HAP-1 (cell line): ENCODE measurements at regions of chr2 and their contacts with region 1.

Region 1: GRCh38 chr2:9139491-9140443 is 66.8 kb upstream of the ASAP2 start:
- DNase-seq: peak; percentile 52 to 94
- H3K4me3 ChIP-seq: no peak overlapping the region
- H3K4me1 ChIP-seq: peaks cover 18% of the 10 kb centered on the region
- H3K27me3 ChIP-seq: no peaks in the 10 kb centered on the region

Region 2: DNA sequence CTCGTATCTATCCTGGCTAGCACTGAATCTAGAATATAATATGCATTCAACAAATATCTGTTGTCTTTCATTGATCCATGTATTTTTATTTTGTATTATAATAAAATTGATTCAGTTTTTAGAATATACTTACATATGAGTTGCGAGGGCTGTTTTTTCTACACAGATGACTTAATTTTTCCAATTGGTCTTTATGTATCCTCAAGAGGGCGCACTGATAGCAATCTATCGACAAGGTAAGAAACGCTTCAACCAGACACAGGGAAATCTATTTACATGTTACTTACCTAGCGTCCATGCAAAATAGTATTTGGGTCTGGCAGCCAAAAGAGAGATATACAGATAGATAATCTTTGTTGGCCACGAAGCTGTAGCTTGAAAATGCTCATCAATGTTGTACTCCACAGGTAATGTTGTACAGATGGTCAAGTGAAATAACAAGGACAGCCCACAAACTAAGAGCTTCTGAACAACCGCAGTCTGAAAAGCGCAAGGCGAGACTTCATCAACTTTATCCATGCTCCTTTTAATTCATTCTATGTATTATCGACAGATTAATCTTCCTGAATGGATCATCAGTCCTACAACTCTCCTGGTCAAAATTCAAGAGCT is 266.8 kb before region 1 on chr2:
- in situ Hi-C with region 1: loop called (anchors 10 kb)
- DNase-seq: peak in 1 of 2 experiments; percentile 55
- H3K4me3 ChIP-seq: no peak overlapping the region
- H3K4me1 ChIP-seq: no peaks in the 10 kb centered on the region
- H3K27me3 ChIP-seq: no peaks in the 10 kb centered on the region